HCT116 (cell line): ENCODE measurements at regions of chr17 and their contacts with region 1.

Region 1: DNA sequence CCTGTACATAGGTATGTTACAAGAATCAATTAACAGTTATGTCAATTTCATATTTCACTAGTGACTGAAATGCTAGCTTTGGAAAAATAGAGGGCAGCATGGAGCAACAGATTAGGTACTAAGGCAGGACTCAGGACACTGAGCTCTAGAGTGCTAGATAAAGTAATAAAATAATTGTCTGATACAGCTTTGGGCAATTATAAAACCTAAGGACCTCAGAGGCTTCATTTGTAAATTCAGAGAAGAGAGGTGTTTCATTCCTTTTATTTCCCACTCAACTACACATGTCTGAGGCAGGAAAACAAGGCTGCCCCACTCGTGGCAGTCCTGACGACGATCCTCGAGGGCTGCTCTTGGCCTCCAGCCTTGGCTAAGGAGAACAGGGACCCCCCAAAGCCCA is 81.5 kb downstream of the CA4 start:
- DNase-seq: peak; percentile 10
- ATAC-seq: peak; percentile 80
- H3K4me3 ChIP-seq: no peak overlapping the region
- H3K27ac ChIP-seq: no peak overlapping the region
- H3K4me1 ChIP-seq: peaks cover 0 to 7% of the 10 kb centered on the region in 2 experiments; a peak in 2 of 4 replicates
- H3K27me3 ChIP-seq: no peaks in the 10 kb centered on the region
- CTCF ChIP-seq: peak; percentile 52 to 69 (median 62); a peak in 5 of 6 replicates
- POLR2A ChIP-seq: no peak
- RAD21 ChIP-seq: peak; percentile 68

Region 2: GRCh38 chr17:60102632-60103096 is 128.6 kb before region 1 on chr17:
- CTCF ChIA-PET with region 1: no interaction called
- POLR2A ChIA-PET with region 1: no interaction called
- RAD21 ChIA-PET with region 1: no interaction called
- intact Hi-C with region 1: loop called (anchors 10 kb)
- DNase-seq: no peak
- ATAC-seq: no peak
- H3K4me3 ChIP-seq: no peak overlapping the region
- H3K27ac ChIP-seq: no peak overlapping the region
- H3K4me1 ChIP-seq: no peaks in the 10 kb centered on the region
- H3K27me3 ChIP-seq: no peaks in the 10 kb centered on the region
- CTCF ChIP-seq: no peak
- POLR2A ChIP-seq: no peak
- RAD21 ChIP-seq: no peak

Region 3: GRCh38 chr17:60142872-60143499 is 88.2 kb before region 1 on chr17:
- CTCF ChIA-PET with region 1: interaction called, 13 read pairs
- POLR2A ChIA-PET with region 1: no interaction called
- RAD21 ChIA-PET with region 1: interaction called in 1 of 2 experiments, 3 read pairs
- intact Hi-C with region 1: loop called (anchors 1 kb)
- DNase-seq: peak; percentile 82
- ATAC-seq: peak; percentile 88
- H3K4me3 ChIP-seq: peak overlapping the region; percentile 15 to 26
- H3K27ac ChIP-seq: no peak overlapping the region
- H3K4me1 ChIP-seq: peaks cover 18 to 26% of the 10 kb centered on the region in 2 experiments
- H3K27me3 ChIP-seq: no peaks in the 10 kb centered on the region
- CTCF ChIP-seq: peak; percentile 91 to 96 (median 93)
- POLR2A ChIP-seq: no peak
- RAD21 ChIP-seq: peak; percentile 96

Region 4: DNA sequence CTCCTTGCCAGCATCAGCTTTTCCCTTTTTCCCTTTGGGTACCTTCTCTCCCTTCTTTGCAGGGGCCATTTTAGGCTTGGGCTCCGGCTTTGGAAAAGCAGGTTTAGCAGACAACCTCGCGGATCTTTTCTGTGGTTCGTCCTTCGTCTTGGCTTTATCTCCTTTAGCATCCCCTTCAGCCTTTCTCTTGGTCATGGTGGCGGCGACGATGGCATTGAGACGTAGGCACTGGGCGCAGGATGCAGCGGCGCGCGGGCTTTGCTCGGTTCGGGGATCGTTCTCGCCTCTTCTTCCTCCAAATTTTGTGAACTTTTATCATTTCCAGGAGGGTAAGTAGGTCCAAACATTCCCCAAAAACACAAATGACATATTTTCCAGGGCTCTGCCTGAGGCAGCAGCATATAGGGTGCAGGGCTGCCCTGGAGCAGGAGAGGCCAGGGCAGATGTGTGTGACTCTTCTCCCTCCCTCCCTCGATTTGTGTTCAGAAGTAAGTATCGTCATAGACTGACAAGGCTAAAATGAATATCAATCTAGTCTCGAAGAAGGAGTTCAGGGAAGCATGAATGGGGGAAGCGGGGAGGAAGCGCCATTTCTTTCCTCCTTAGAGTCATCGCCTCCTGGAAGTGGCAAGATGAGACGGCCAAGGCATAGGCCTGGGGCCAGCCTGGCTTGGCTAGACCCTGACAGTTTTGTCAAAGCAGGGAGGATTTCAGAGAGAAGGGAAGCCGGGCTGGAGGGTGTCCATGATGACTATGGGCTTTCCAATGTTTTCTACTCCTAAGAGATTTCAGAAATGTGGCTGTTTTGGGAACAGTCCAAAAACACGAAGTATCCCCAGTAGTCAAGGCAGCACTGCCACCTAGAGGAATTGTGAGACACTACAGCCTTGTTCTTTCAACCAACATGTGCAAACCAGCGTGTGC is 204.3 kb after region 1 on chr17:
- CTCF ChIA-PET with region 1: interaction called, 5 read pairs
- POLR2A ChIA-PET with region 1: no interaction called
- RAD21 ChIA-PET with region 1: no interaction called
- intact Hi-C with region 1: loop called (anchors 1 kb)
- DNase-seq: peak; percentile 79
- ATAC-seq: peak; percentile 87
- H3K4me3 ChIP-seq: no peak overlapping the region
- H3K27ac ChIP-seq: no peak overlapping the region
- H3K4me1 ChIP-seq: peaks cover 0 to 5% of the 10 kb centered on the region in 2 experiments; a peak in 2 of 4 replicates
- H3K27me3 ChIP-seq: no peaks in the 10 kb centered on the region
- CTCF ChIP-seq: peak; percentile 95 to 99 (median 97)
- POLR2A ChIP-seq: no peak
- RAD21 ChIP-seq: peak; percentile 100

Region 5: DNA sequence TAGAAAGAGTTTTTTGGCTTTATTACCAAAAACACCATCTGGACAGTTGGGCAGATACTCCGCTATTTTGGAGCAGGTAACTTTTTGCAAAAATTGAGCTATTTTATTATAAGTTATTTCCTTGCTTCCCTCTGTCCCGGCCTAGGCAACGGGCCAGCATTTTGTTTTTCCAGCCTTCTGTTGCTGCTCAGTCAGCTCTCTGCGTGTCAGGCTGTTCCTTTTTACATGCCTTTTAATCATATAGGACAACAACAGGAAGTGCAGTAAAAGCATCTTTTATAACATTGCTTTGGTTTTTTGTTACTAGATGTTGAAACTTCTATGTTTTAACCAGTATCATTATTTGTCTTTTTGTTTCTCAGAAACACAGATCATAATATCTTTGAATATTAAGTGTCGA is 399.1 kb after region 1 on chr17:
- CTCF ChIA-PET with region 1: no interaction called
- POLR2A ChIA-PET with region 1: no interaction called
- RAD21 ChIA-PET with region 1: no interaction called
- intact Hi-C with region 1: loop called (anchors 10 kb)
- DNase-seq: no peak
- ATAC-seq: no peak
- H3K4me3 ChIP-seq: no peak overlapping the region
- H3K27ac ChIP-seq: no peak overlapping the region
- H3K4me1 ChIP-seq: no peaks in the 10 kb centered on the region
- H3K27me3 ChIP-seq: no peaks in the 10 kb centered on the region
- CTCF ChIP-seq: no peak
- POLR2A ChIP-seq: no peak
- RAD21 ChIP-seq: no peak

Region 6: GRCh38 chr17:60641810-60642220 is 410.6 kb after region 1 on chr17:
- CTCF ChIA-PET with region 1: interaction called, 10 read pairs
- POLR2A ChIA-PET with region 1: interaction called, 3 read pairs
- RAD21 ChIA-PET with region 1: no interaction called
- intact Hi-C with region 1: loop called (anchors 10 kb)
- DNase-seq: peak; percentile 78
- ATAC-seq: peak; percentile 79
- H3K4me3 ChIP-seq: no peak overlapping the region
- H3K27ac ChIP-seq: no peak overlapping the region
- H3K4me1 ChIP-seq: peaks cover 4 to 6% of the 10 kb centered on the region in 2 experiments; a peak in 3 of 4 replicates
- H3K27me3 ChIP-seq: no peaks in the 10 kb centered on the region
- CTCF ChIP-seq: peak; percentile 46 to 80 (median 67); a peak in 5 of 6 replicates
- POLR2A ChIP-seq: no peak
- RAD21 ChIP-seq: peak; percentile 64

Region 7: GRCh38 chr17:61794792-61795191 is 1563.6 kb after region 1 on chr17:
- CTCF ChIA-PET with region 1: no interaction called
- POLR2A ChIA-PET with region 1: no interaction called
- RAD21 ChIA-PET with region 1: no interaction called
- intact Hi-C with region 1: loop called (anchors 5 kb)
- DNase-seq: no peak
- ATAC-seq: no peak
- H3K4me3 ChIP-seq: no peak overlapping the region
- H3K27ac ChIP-seq: no peak overlapping the region
- H3K4me1 ChIP-seq: no peaks in the 10 kb centered on the region
- H3K27me3 ChIP-seq: no peaks in the 10 kb centered on the region
- CTCF ChIP-seq: no peak
- POLR2A ChIP-seq: no peak
- RAD21 ChIP-seq: no peak